ENCODE measurements at regions of chr18 and their contacts with region 1.

Region 1: GRCh38 chr18:7094432-7094831 is 23.2 kb downstream of the LAMA1 start:
- DNase-seq: no peak
- ATAC-seq: no peak
- H3K4me3 ChIP-seq: no peak overlapping the region
- H3K27ac ChIP-seq: no peak overlapping the region
- H3K4me1 ChIP-seq: no peaks in the 10 kb centered on the region
- H3K27me3 ChIP-seq: peaks cover 77% of the 10 kb centered on the region
- CTCF ChIP-seq: no peak

Region 2: DNA sequence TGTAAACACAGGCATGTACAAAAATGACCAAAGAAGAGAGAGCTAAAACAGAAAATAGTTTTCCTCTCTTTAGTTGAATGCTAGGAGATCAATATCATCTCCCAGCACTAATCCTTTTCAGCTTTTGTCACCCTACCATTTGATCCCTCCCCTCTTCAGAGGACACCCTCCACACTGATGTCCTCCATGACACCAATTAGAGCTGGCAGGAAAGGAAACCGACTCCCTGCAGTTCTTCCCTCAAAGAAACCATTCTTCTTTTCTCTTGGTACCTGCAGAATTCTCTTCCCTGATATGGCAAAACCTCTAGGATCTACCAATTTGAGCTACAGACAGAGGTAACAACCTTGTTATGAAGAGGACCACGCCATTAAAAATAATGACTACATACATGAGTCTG is 1555.9 kb before region 1 on chr18:
- CTCF ChIA-PET with region 1: no interaction called
- POLR2A ChIA-PET with region 1: interaction called, 17 read pairs
- intact Hi-C with region 1: no loop called
- DNase-seq: no peak
- ATAC-seq: no peak
- H3K4me3 ChIP-seq: no peak overlapping the region
- H3K27ac ChIP-seq: no peak overlapping the region
- H3K4me1 ChIP-seq: no peaks in the 10 kb centered on the region
- H3K27me3 ChIP-seq: peaks cover 12% of the 10 kb centered on the region
- CTCF ChIP-seq: no peak

Region 3: DNA sequence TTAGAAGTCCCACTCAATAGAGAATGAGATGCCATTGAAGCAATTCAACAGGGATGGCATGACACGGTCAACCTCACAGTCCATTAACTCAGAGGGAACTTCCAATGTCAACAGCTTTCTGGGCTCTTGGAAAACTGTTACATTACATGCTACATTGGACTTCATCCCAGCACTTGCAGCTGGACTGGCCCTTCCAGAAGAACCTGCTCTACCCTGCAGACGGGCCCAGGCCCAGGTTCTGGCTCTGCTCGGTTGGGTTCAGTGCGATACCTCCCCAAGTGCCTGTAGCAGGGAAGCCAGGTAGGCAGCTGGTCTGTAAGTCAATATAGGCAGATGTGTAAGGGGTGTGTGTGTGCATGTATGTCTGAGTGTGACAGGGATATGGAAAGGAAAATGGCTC is 10.2 kb after region 1 on chr18:
- CTCF ChIA-PET with region 1: interaction called, 10 read pairs
- POLR2A ChIA-PET with region 1: no interaction called
- intact Hi-C with region 1: no loop called
- DNase-seq: no peak
- ATAC-seq: no peak
- H3K4me3 ChIP-seq: no peak overlapping the region
- H3K27ac ChIP-seq: no peak overlapping the region
- H3K4me1 ChIP-seq: no peaks in the 10 kb centered on the region
- H3K27me3 ChIP-seq: peaks cover 37% of the 10 kb centered on the region
- CTCF ChIP-seq: no peak